BJ (cell line): ENCODE measurements at regions of chr17 and their contacts with region 1.

Region 1: GRCh38 chr17:46940621-46941404 is 17.9 kb downstream of the GOSR2 start:
- DNase-seq: no peak
- H3K4me3 ChIP-seq: no peak overlapping the region
- H3K27me3 ChIP-seq: no peaks in the 10 kb centered on the region
- CTCF ChIP-seq: peak; percentile 94

Region 2: DNA sequence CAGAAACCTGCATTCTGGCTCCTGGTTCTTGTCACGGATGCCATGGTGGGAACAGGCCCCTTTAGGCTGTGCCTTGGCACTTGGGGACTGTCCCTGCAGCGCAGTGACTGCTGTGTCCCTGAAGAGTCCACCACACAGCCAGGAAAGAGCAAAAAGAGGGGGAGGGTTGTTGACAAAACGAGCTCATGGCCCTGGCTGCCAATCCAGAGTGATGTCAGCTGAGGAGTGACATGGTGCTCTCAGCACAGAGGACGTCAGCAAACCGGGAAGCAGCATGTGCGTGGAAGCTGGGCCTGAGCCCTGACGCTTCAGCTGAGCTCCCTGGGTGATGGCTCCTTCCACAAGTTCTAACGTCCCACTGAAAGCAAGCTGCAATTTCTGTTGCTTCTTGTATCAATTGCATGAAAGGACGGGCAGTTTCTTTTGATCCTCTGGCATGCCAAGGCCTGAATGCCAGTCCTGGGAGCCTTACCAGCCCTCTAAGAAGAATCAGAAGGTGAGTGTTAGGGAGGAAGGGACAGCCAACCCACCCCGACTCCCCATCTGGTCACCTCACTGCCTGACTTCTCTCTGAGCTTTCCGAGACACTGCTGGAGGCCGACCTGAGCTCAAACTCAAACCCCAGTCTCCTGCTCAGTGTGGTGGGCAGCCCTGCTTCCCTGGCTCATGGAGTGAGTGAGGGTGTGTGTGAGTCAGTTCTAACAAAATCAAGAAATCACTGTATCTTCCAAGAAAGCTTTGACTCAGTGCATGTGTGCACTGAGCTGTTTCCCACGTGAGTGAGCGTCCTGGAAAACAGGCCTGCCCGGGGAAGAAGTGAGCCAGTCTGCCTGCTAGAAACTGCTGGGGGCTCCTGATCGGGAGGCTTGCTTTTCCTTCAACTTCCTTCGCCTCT is 107.6 kb before region 1 on chr17:
- CTCF ChIA-PET with region 1: interaction called, 36 read pairs
- POLR2A ChIA-PET with region 1: no interaction called
- DNase-seq: peak; percentile 19
- H3K4me3 ChIP-seq: no peak overlapping the region
- H3K27me3 ChIP-seq: peaks cover 2% of the 10 kb centered on the region; the same call in 1 of the 2 replicates
- CTCF ChIP-seq: no peak

Region 3: GRCh38 chr17:46929413-46929812 is 11.4 kb before region 1 on chr17:
- CTCF ChIA-PET with region 1: interaction called, 20 read pairs
- POLR2A ChIA-PET with region 1: no interaction called
- DNase-seq: peak; percentile 39
- H3K4me3 ChIP-seq: no peak overlapping the region
- H3K27me3 ChIP-seq: no peaks in the 10 kb centered on the region
- CTCF ChIP-seq: no peak

Region 4: DNA sequence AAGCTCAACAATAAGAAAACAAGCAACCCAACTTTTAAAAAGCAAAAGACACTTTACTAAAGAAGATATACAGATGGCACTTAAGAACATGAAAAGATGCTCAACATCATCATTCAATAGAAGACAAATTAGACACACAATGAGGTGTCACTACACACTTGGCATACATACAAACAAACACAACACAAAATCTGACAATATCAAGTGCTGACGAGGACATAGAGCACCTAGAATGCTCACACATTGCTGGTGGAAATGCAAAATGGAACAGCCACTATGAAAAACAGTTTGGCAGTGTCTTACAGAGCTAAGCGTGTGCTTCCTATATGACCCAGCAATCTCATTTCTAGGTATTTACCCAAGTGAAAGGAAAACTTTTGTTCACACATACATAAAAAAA is 19.3 kb after region 1 on chr17:
- CTCF ChIA-PET with region 1: interaction called, 16 read pairs
- POLR2A ChIA-PET with region 1: no interaction called
- DNase-seq: no peak
- H3K4me3 ChIP-seq: no peak overlapping the region
- H3K27me3 ChIP-seq: peaks cover 7% of the 10 kb centered on the region
- CTCF ChIP-seq: no peak

Region 5: GRCh38 chr17:47004906-47005305 is 64.1 kb after region 1 on chr17:
- CTCF ChIA-PET with region 1: interaction called, 66 read pairs
- POLR2A ChIA-PET with region 1: no interaction called
- DNase-seq: no peak
- H3K4me3 ChIP-seq: no peak overlapping the region
- H3K27me3 ChIP-seq: no peaks in the 10 kb centered on the region
- CTCF ChIP-seq: no peak